BJ (cell line): ENCODE measurements at regions of chr12 and their contacts with region 1.

Region 1: GRCh38 chr12:25328072-25328712 is 77.5 kb upstream of the KRAS start:
- DNase-seq: no peak
- H3K4me3 ChIP-seq: no peak overlapping the region
- H3K27me3 ChIP-seq: no peaks in the 10 kb centered on the region
- CTCF ChIP-seq: no peak

Region 2: DNA sequence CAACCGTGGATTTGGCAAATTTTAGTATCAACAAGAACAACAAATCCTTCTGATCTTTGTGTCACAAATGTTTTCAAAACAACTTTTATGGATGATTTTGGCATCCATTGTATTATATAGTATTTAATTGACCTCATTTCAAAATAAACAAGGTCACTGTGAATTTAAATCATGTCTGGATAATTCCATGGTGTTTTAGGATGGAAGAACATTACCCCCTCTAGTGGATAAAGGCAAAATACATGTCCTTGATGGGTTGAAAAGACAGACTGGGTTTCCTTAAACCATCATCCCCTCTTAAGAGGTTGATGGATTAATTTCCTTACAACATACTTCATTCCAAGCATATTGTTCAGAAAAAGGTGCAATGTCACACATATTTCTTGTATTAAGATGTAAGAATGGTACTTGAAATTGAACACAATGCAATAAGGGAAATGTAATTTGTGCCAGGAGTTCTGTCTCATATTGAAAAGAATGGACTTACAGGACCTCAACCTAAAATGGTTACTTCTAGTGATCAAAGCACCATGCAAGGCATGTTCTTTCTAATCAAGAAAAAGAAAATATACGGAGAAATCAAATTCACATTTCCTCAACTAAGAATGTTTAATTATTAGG is 731.3 kb before region 1 on chr12:
- CTCF ChIA-PET with region 1: no interaction called
- POLR2A ChIA-PET with region 1: no interaction called
- DNase-seq: no peak
- H3K4me3 ChIP-seq: no peak overlapping the region
- H3K27me3 ChIP-seq: 0 out of 2 replicates have a peak, but pooled peaks cover 1% of the 10 kb centered on the region
- CTCF ChIP-seq: peak; percentile 65

Region 3: DNA sequence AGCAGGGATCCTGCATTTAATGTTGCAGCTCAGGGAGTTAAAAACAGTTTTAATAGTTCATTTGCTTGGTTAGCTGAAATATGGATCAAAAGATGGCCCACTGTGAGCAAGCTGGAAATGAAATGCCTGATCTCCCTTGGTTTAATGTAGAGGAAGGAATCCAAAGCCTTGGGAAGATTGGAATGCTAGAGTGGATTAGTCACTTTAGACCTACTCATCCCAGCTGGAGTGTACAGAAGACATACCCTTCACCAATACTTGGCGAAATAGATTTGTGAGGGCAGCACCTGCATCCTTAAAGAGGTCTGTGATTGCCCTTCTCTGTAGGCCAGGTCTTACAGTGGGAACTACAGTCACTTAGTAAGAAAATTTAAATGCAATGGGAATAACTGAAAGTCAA is 19.4 kb before region 1 on chr12:
- CTCF ChIA-PET with region 1: interaction called, 3 read pairs
- POLR2A ChIA-PET with region 1: interaction called, 10 read pairs
- DNase-seq: no peak
- H3K4me3 ChIP-seq: no peak overlapping the region
- H3K27me3 ChIP-seq: no peaks in the 10 kb centered on the region
- CTCF ChIP-seq: no peak

Region 4: GRCh38 chr12:25614813-25615518 is 286.8 kb after region 1 on chr12:
- CTCF ChIA-PET with region 1: no interaction called
- POLR2A ChIA-PET with region 1: no interaction called
- DNase-seq: peak; percentile 82
- H3K4me3 ChIP-seq: no peak overlapping the region
- H3K27me3 ChIP-seq: no peaks in the 10 kb centered on the region
- CTCF ChIP-seq: no peak